ENCODE measurements at regions of chr1 and their contacts with region 1.

Region 1: GRCh38 chr1:206808615-206809014 is 36.3 kb upstream of the IL10 start:
- DNase-seq: no peak
- CTCF ChIP-seq: peak; percentile 76

Region 2: GRCh38 chr1:206716870-206717673 is 91.5 kb before region 1 on chr1:
- CTCF ChIA-PET with region 1: interaction called, 10 read pairs
- POLR2A ChIA-PET with region 1: no interaction called
- DNase-seq: peak; percentile 51
- CTCF ChIP-seq: no peak

Region 3: GRCh38 chr1:206784471-206784903 is 24.1 kb before region 1 on chr1:
- CTCF ChIA-PET with region 1: interaction called, 288 read pairs
- POLR2A ChIA-PET with region 1: no interaction called
- DNase-seq: peak; percentile 76
- CTCF ChIP-seq: no peak

Region 4: DNA sequence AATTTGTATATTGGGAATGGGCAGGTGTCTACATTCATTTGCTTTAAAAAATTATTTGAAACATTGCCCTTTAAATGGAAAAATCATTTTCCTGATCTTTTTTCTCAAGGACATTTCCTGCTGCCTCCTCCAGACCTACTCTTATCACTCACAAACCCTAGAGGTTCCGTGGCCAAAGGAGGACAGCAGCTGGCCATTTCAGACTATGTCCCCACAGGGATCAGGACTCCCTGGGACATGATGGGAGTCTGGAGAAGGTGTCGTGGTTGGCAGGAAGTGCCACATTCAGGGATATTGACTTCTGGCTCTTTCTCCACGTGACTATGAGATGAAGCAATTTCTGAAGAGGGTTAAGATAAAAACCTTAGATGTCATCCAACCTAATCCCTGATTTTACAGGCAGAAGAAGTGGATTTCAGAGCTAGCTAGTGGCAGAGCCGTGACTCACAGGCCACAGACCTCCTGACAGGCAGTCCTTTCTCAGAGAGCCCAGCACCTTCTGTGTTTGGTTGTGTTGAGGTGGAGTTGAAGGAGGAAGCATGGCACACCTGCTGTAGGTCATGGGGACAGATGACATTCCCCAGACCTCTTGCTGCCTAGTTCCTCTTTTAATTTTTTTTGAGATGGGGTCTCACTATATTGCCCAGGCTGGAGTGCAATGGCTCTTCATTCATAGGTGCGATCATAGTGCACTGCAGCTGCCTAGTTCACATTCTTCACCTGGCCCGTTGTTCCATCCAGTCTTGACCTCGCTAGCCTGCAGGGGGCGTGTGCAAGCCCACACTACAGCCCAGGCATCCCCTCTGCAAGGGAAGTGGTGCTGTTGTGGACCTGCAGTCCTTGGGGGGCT is 10.9 kb before region 1 on chr1:
- CTCF ChIA-PET with region 1: interaction called, 27 read pairs
- POLR2A ChIA-PET with region 1: interaction called, 3 read pairs
- DNase-seq: no peak
- CTCF ChIP-seq: peak; percentile 54

Region 5: DNA sequence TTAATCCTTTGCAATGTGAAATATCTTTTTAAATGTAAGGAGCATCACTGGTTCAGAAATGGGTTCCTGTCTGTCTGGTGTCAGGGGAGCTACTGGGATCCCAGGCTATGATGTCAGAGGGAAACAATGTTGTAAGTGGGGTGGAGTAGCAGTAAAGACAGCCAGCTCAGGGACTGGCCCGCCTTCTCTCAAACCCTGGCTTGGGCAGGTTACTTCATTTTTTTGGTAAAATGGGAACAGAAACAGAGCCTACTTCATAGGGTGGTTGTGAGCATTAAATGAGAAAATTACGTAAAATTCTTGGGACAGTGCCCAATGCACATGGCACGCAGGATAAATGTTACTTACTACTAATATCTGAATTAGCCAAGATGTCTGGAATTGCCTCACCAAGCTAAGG is 26.1 kb after region 1 on chr1:
- CTCF ChIA-PET with region 1: interaction called, 40 read pairs
- POLR2A ChIA-PET with region 1: no interaction called
- DNase-seq: no peak
- CTCF ChIP-seq: no peak

Measured in GM10248 (cell line).